ENCODE measurements at regions of chr1 and their contacts with region 1.

Region 1: GRCh38 chr1:90936061-90936460 is 85.8 kb downstream of the ZNF644 start:
- DNase-seq: no peak
- ATAC-seq: no peak
- H3K4me3 ChIP-seq: no peak overlapping the region
- H3K4me3 Mint-ChIP-seq: peak overlapping the region; percentile 15
- H3K27ac ChIP-seq: no peak overlapping the region
- H3K27ac Mint-ChIP-seq: peak overlapping the region; percentile 4
- H3K4me1 ChIP-seq: peaks cover 6% of the 10 kb centered on the region
- H3K4me1 Mint-ChIP-seq: peaks cover 82% of the 10 kb centered on the region
- H3K27me3 ChIP-seq: no peaks in the 10 kb centered on the region
- H3K27me3 Mint-ChIP-seq: no peaks in the 10 kb centered on the region
- CTCF ChIP-seq: no peak

Region 2: DNA sequence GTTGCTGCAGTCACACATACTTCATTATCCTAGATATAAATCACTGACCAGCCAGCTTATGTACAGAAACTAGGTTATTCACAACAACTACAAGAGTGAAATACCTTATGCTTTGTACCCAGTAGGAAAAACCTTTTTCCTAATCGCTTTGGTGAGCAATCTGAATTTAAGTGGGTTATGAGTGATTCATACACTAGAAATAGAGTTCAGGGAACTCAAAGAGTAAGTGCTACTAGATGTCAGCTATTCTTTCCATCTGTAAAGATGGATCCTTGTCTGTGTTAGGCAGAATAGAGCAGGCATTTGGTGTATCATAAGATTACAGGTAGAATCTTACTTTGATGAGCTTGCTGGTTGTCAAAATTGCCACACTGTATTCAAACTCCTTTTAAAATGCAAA is 16.2 kb before region 1 on chr1:
- CTCF ChIA-PET with region 1: no interaction called
- POLR2A ChIA-PET with region 1: interaction called, 3 read pairs
- intact Hi-C with region 1: loop called in 1 of 2 experiments (anchors 2 kb)
- DNase-seq: no peak
- ATAC-seq: no peak
- H3K4me3 ChIP-seq: no peak overlapping the region
- H3K4me3 Mint-ChIP-seq: no peak overlapping the region
- H3K27ac ChIP-seq: no peak overlapping the region
- H3K27ac Mint-ChIP-seq: peak overlapping the region; percentile 70
- H3K4me1 ChIP-seq: peaks cover 58% of the 10 kb centered on the region
- H3K4me1 Mint-ChIP-seq: peaks cover 60% of the 10 kb centered on the region
- H3K27me3 ChIP-seq: no peaks in the 10 kb centered on the region
- H3K27me3 Mint-ChIP-seq: no peaks in the 10 kb centered on the region
- CTCF ChIP-seq: no peak